Activated T-helper 2 cell treated with anti-CD3 and anti-CD28 coated beads, Interferon-gamma antibody, Interleukin-2, Interleukin-4, amounts not matched to agents 10 μg/mL and 5 μg/mL and 100 μg/mL, durations not matched to agents 14 hours and 24 hours and 36 hours (primary cell): ENCODE measurements at regions of chr16 and their contacts with region 1.

Region 1: GRCh38 chr16:79269211-79269863 is 331.2 kb downstream of the MAF start:
- DNase-seq: peak; percentile 68
- H3K4me3 Mint-ChIP-seq: peak overlapping the region; percentile 38
- H3K27ac Mint-ChIP-seq: peak overlapping the region; percentile 87
- H3K4me1 Mint-ChIP-seq: peaks cover 89% of the 10 kb centered on the region
- H3K27me3 Mint-ChIP-seq: no peaks in the 10 kb centered on the region

Region 2: DNA sequence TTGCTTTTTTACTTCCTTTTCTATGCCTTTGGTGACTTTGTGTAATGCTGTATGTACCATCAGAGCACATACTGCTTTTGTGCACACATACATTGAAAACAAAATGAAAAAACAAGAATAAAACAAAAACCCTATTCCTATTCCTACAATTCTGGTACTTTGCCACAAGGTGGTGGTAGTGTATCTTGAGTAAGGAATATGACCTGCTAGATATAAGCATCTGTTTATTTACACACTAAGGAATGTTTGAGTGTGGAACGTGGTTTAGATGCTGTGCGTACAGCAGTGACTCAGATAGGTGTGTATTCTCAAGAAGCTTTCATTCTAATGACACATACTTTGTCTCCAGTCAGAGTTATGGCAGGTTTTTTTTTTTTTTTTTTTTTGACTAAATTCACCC is 563.6 kb before region 1 on chr16:
- intact Hi-C with region 1: loop called (anchors 5 kb)
- DNase-seq: no peak
- H3K4me3 Mint-ChIP-seq: no peak overlapping the region
- H3K27ac Mint-ChIP-seq: no peak overlapping the region
- H3K4me1 Mint-ChIP-seq: peaks cover 6% of the 10 kb centered on the region
- H3K27me3 Mint-ChIP-seq: peaks cover 4% of the 10 kb centered on the region

Region 3: DNA sequence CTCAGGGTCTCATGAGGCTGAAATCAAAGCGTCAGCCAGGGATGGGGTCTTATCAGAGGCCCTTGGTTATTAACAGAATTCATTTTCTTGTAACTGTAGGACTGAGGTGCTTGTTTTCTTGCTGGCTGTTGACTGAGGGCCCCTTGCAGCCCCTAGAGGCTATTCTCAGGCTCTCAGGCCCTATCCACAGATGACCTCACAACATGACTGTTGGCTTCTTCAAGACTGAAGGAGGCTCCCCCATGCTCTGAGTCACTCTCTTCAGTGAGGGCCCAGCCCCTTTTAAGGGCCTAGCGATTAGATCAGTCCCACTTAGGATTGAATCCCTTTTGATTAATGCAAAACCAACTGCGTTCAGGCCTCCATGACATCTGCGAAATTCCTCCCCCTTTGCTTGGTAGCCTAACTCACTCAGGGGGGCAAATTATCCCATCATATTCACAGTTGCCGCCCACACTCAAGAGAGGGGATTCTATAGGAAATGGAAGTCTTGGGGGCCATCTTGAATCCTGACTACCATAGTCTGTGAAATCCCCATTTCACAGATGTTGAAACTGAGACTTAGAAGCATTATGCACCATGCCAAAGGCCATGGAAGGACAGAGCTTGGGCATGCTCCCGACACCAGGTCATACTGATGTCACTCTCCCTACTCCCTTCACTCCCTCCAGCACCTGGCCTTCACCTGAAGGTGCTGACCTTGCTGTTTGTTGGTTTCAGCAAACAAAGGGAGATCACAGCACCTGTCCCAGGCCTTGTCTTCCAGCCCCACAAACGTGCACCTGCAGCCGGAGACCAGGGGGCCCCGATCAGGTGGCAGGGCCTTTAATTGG is 261.1 kb before region 1 on chr16:
- intact Hi-C with region 1: loop called (anchors 1 kb)
- DNase-seq: no peak
- H3K4me3 Mint-ChIP-seq: no peak overlapping the region
- H3K27ac Mint-ChIP-seq: peak overlapping the region; percentile 54
- H3K4me1 Mint-ChIP-seq: peaks cover 24% of the 10 kb centered on the region
- H3K27me3 Mint-ChIP-seq: no peaks in the 10 kb centered on the region

Region 4: GRCh38 chr16:79158337-79158736 is 111.0 kb before region 1 on chr16:
- intact Hi-C with region 1: loop called (anchors 5 kb)
- DNase-seq: no peak
- H3K4me3 Mint-ChIP-seq: no peak overlapping the region
- H3K27ac Mint-ChIP-seq: no peak overlapping the region
- H3K4me1 Mint-ChIP-seq: peaks cover 49% of the 10 kb centered on the region
- H3K27me3 Mint-ChIP-seq: no peaks in the 10 kb centered on the region

Region 5: GRCh38 chr16:79286646-79287423 is 17.5 kb after region 1 on chr16:
- intact Hi-C with region 1: loop called (anchors 1 kb)
- DNase-seq: no peak
- H3K4me3 Mint-ChIP-seq: peak overlapping the region; percentile 2
- H3K27ac Mint-ChIP-seq: peak overlapping the region; percentile 72
- H3K4me1 Mint-ChIP-seq: peaks cover 52% of the 10 kb centered on the region
- H3K27me3 Mint-ChIP-seq: no peaks in the 10 kb centered on the region

Region 6: DNA sequence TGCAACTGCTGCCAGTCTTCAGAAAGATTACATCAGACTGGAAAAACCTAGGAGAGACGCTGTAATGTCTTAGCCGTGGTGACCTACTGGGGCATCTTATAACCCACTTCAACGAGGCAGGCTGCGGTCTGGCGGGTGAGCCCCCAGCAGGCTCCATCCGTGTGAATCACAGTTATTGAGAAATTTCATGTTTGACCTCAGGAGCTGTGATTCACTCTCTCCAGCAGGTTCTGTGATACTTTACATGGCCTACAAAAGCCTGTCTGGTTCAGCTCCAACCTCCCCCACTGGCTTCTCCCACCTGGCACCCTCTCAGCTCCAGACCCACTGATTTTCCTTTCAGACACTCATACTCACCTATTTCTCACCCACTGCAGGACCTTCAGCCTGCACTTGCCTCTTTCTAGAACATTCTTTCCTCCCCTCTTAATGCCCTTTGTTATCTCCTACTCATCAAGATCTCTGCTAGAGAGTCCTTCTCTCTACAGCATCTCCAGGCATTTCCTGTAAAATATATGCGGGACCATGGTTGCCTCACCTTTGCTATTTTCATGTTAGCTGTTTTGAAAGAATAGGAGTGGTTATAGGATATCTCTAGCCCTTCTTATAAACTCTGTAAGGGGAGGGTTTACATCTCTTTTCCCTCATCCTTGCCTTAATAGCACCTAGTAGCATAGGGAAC is 103.3 kb after region 1 on chr16:
- intact Hi-C with region 1: loop called (anchors 2 kb)
- DNase-seq: no peak
- H3K4me3 Mint-ChIP-seq: no peak overlapping the region
- H3K27ac Mint-ChIP-seq: peak overlapping the region; percentile 69
- H3K4me1 Mint-ChIP-seq: peaks cover 15% of the 10 kb centered on the region
- H3K27me3 Mint-ChIP-seq: no peaks in the 10 kb centered on the region